ENCODE measurements at regions of chr2 and their contacts with region 1.

Region 1: DNA sequence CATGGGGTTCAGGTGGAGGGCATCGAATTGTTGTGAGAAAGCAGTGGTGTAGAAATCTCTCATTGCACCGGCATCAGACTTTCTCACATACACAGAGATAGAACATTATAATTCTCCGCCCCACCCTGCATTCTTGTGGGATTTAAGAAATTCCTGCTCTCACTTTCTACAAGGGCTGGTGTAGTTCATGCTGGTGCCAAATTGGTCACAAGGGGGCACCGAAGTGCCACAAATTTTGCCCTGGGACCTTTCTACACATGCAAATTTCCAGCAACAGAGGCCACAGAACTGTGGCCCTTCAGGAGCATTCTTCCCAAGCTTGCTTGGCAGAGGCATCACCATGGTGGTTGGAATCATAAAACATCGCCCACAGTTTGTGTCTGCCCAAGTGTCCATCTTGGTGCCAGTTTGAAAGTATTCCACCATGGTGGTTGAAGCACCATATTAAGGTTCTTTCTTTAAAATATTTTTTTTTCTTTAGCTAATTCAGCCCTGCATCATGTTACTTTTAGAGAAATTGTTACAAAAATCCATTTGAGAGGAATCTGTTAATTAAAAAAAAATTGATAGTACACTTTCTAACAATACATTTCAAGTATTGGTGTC is 521.2 kb upstream of the FANCL start:
- DNase-seq: peak; percentile 59
- ATAC-seq: no peak
- H3K4me3 Mint-ChIP-seq: no peak overlapping the region
- H3K27ac Mint-ChIP-seq: no peak overlapping the region
- H3K4me1 Mint-ChIP-seq: peaks cover 3% of the 10 kb centered on the region
- H3K27me3 Mint-ChIP-seq: peaks cover 2% of the 10 kb centered on the region

Region 2: GRCh38 chr2:59182249-59182648 is 420.0 kb after region 1 on chr2:
- CTCF ChIA-PET with region 1: no interaction called
- POLR2A ChIA-PET with region 1: no interaction called
- intact Hi-C with region 1: loop called in 1 of 2 experiments (anchors 2 kb)
- DNase-seq: peak; percentile 8
- ATAC-seq: no peak
- H3K4me3 Mint-ChIP-seq: no peak overlapping the region
- H3K27ac Mint-ChIP-seq: no peak overlapping the region
- H3K4me1 Mint-ChIP-seq: no peaks in the 10 kb centered on the region
- H3K27me3 Mint-ChIP-seq: no peaks in the 10 kb centered on the region

Region 3: DNA sequence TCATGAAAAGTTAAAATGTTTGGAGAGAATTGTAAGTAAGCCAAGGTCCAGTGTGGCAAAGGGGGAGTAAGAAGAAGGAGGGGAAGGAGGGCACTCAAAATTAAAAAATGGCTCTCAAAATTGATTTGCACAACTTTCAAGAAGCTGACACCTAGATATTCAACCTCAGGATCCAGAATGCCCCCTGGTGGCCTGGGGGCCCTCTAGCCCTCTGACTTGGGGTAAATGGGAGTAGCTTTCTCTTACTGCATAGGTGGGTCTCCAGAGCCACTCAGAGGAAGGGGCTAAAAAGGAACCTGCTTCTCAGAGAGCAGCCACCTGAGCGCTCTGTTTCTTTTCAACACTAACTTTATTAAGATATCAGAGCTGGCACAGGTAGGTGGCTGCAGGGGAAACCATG is 822.7 kb after region 1 on chr2:
- CTCF ChIA-PET with region 1: no interaction called
- POLR2A ChIA-PET with region 1: no interaction called
- intact Hi-C with region 1: loop called in 1 of 2 experiments (anchors 5 kb)
- DNase-seq: peak; percentile 35
- ATAC-seq: no peak
- H3K4me3 Mint-ChIP-seq: no peak overlapping the region
- H3K27ac Mint-ChIP-seq: no peak overlapping the region
- H3K4me1 Mint-ChIP-seq: no peaks in the 10 kb centered on the region
- H3K27me3 Mint-ChIP-seq: no peaks in the 10 kb centered on the region